Activated B cell treated with CpG ODN at 0.5 μM for 24 hours (primary cell): ENCODE measurements at regions of chr12 and their contacts with region 1.

Region 1: GRCh38 chr12:55619354-55620138 is 17.1 kb upstream of the OR10P1 start:
- DNase-seq: no peak
- ATAC-seq: peak; percentile 87
- H3K4me3 Mint-ChIP-seq: no peak overlapping the region
- H3K27ac Mint-ChIP-seq: no peak overlapping the region
- H3K4me1 Mint-ChIP-seq: no peaks in the 10 kb centered on the region
- H3K27me3 Mint-ChIP-seq: peaks cover 13% of the 10 kb centered on the region
- CTCF ChIP-seq: no peak

Region 2: GRCh38 chr12:55188974-55189556 is 430.5 kb before region 1 on chr12:
- CTCF ChIA-PET with region 1: interaction called, 49 read pairs
- POLR2A ChIA-PET with region 1: no interaction called
- intact Hi-C with region 1: loop called (anchors 1 kb)
- DNase-seq: no peak
- ATAC-seq: peak; percentile 81
- H3K4me3 Mint-ChIP-seq: no peak overlapping the region
- H3K27ac Mint-ChIP-seq: no peak overlapping the region
- H3K4me1 Mint-ChIP-seq: no peaks in the 10 kb centered on the region
- H3K27me3 Mint-ChIP-seq: peaks cover 6% of the 10 kb centered on the region
- CTCF ChIP-seq: peak; percentile 87

Region 3: GRCh38 chr12:55416961-55417360 is 202.6 kb before region 1 on chr12:
- CTCF ChIA-PET with region 1: no interaction called
- POLR2A ChIA-PET with region 1: no interaction called
- intact Hi-C with region 1: no loop called
- DNase-seq: no peak
- ATAC-seq: no peak
- H3K4me3 Mint-ChIP-seq: no peak overlapping the region
- H3K27ac Mint-ChIP-seq: no peak overlapping the region
- H3K4me1 Mint-ChIP-seq: peaks cover 6% of the 10 kb centered on the region
- H3K27me3 Mint-ChIP-seq: peaks cover 33% of the 10 kb centered on the region
- CTCF ChIP-seq: no peak

Region 4: DNA sequence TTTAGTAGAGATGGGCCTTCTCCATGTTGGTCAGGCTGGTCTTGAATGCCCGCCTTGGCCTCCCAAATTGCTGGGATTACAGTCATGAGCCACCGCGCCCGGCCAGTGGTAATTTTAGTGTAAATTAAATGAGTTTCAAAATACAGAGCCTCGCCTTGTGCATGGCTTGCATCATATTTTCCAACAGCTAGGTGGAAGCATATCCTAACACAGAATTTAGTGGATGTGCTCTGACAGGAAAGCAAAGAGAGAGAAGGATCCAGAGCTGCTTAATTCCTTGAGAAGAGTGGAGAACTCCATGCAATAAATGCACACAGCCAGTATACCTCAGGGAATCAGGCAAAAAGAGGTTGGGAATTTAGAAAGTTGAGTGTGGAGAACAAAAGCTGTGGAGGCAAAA is 173.2 kb before region 1 on chr12:
- CTCF ChIA-PET with region 1: no interaction called
- POLR2A ChIA-PET with region 1: no interaction called
- intact Hi-C with region 1: loop called (anchors 1 kb)
- DNase-seq: no peak
- ATAC-seq: no peak
- H3K4me3 Mint-ChIP-seq: no peak overlapping the region
- H3K27ac Mint-ChIP-seq: no peak overlapping the region
- H3K4me1 Mint-ChIP-seq: peaks cover 5% of the 10 kb centered on the region
- H3K27me3 Mint-ChIP-seq: peaks cover 4% of the 10 kb centered on the region
- CTCF ChIP-seq: no peak